ENCODE measurements at regions of chr19 and their contacts with region 1.

Region 1: GRCh38 chr19:13195678-13196077 is 45.5 kb downstream of the IER2 start:
- DNase-seq: peak; percentile 69
- CTCF ChIP-seq: peak; percentile 78

Region 2: DNA sequence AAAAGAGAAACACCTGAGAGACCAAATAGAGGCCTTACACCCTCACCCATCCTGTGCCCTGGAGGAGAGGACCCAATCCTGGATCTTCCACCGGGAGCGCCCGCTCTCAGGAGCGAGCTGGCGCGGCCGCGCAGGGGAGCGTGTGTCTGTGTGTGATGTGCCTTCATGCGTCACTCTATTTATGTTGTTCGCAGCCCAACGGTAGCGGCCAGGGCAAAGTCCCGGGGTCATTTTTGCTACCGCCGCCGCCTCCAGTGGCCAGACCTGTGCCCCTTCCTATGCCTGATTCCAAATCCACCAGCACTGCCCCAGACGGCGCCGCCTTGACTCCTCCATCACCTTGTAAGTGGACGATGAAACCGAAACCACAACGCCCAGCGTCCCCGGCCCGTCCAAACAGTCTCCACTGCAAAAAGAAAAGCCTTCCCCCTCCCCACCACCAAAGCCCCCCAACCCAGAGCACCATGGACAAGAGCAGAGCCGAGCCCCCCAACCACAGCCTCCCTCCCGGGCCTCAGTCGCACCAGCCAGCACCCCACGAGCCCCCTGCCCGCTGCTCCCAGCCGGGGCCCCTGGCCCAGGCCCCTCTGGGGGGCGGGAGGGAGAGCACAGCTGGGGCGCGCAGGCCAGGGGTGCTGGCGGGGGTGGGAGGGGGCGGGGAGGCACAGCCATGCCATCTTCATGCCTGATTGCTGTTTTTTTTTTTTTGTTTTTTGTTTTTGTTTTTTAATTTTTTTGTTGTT is 107.7 kb before region 1 on chr19:
- CTCF ChIA-PET with region 1: no interaction called
- POLR2A ChIA-PET with region 1: no interaction called
- DNase-seq: no peak
- CTCF ChIP-seq: no peak

Region 3: DNA sequence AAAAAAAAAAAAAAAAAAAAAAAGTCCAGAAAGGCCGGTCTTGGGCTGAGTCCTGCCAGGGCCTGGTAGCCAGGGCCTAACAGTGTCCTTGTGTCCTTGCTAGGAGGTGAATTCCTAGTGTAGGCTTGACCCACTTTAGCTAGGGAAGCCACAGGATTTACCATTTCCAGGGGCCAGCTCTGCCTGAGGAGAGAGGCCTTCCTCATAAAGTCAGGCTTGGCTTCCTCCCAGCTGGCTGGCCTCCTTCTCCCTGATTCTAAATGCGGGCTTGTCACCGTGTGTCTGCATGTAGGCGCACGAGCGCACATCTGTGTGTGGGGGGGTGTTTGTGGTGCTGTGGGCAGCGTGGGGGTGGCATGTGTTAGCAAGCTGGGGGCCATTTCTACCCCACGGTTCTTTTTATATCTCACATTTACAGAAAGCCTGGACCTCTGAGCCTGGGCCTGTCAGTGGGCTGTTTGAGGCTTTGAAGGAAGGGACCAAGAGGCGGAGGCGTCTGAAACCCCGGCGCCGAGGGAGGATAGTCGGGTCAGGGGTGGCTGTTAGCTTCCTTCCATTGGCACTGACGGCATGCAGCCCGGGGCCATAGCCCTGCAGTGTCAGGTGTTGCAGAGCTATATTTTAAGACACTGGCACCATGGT is 13.8 kb before region 1 on chr19:
- CTCF ChIA-PET with region 1: interaction called, 31 read pairs
- POLR2A ChIA-PET with region 1: interaction called, 8 read pairs
- DNase-seq: peak; percentile 64
- CTCF ChIP-seq: no peak

Region 4: GRCh38 chr19:13207237-13207845 is 11.7 kb after region 1 on chr19:
- CTCF ChIA-PET with region 1: interaction called, 30 read pairs
- POLR2A ChIA-PET with region 1: no interaction called
- DNase-seq: peak; percentile 40
- CTCF ChIP-seq: no peak

Region 5: DNA sequence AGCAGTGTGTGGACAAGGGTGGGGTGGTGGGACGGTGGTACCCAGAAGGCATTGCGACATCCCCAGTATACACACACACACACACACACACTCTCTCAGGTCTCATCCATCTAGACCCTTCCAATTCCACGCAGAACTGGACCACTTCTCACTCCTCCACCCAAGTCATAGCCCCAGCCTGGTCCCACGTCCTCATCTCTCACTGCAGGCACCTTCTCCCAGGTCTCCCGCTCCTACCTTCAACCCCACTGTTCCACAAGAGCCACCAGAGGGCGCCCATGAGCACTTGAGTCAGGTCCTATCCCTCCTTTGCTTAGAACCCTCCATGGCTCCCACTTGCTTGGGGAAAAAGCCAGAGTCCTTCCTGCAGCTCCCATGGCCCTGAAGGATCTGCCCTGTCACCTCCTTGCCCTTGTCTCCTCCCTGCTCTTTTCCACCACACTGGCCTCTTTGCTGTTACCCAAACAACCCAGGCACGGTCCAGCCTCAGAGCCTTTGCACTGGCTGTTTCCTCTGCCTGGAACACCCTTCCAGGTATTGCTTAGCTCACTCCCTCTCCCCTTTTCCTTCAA is 17.2 kb after region 1 on chr19:
- CTCF ChIA-PET with region 1: interaction called, 11 read pairs
- POLR2A ChIA-PET with region 1: no interaction called
- DNase-seq: peak; percentile 65
- CTCF ChIP-seq: peak; percentile 83

Region 6: DNA sequence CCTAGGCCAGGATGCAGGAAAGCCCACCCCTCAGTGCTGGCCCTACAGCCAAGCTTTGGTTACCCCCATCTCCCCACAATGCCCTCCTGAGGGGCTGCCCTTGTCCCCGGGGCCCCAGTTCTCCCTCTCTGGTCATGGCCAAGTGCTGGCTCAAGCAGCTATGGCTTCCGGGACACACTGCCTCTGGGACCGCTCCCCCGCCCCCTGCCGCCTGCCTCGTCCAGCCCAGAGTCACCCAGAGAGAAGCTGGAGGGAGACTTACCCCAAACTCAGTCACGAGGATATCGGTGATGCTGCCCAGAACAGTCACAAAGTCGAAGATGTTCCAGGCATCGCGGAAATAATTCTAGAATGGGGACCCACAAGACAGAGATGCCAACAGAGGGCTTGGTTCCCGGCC is 49.2 kb after region 1 on chr19:
- CTCF ChIA-PET with region 1: interaction called, 24 read pairs
- POLR2A ChIA-PET with region 1: no interaction called
- DNase-seq: no peak
- CTCF ChIP-seq: no peak

Region 7: DNA sequence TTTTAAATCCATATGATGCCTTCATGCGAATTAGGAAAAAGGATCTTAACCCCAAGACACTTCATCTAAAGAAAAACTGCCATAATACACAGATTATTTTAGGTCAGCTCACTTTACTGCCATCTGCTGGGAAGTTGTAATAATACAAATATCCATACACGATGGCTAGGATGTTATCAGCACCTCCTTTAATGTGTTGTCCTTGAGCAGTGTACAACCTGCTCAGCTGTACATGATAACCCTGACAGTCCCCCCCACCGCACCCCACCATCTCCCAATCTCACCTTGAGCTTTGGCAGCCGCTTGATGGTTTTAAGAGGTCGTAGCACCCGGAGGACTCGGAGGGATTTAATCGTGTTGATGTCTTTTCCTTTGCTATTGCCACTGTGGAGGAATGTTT is 66.8 kb after region 1 on chr19:
- CTCF ChIA-PET with region 1: interaction called, 44 read pairs
- POLR2A ChIA-PET with region 1: no interaction called
- DNase-seq: peak; percentile 65
- CTCF ChIP-seq: peak; percentile 52

Region 8: DNA sequence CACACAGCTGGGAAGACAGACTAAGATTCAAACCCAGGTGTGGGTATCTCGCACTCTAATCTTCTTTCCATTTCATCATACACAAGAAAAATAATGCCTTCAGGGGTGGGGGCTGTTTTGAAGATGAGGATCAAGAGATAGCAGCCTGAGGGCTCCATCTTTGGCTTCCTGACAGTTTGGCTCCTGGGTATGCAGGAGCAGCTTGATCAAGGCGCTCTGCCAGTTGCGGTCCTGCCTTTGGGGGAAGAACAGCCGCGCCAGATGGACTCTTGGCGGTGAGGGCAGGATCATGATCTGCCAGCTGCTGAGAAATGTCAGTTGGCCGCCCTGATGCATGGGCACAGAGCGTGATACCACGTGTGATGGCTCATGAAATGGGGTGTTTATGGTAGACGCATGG is 73.7 kb after region 1 on chr19:
- CTCF ChIA-PET with region 1: interaction called, 44 read pairs
- POLR2A ChIA-PET with region 1: no interaction called
- DNase-seq: no peak
- CTCF ChIP-seq: no peak